ENCODE measurements at regions of chr6 and their contacts with region 1.

Region 1: GRCh38 chr6:80004173-80005072 is at the start of gene TTK:
- DNase-seq: peak; percentile 96
- ATAC-seq: peak; percentile 100
- total RNA-seq, gene TTK: 0.43 TPM

Region 2: DNA sequence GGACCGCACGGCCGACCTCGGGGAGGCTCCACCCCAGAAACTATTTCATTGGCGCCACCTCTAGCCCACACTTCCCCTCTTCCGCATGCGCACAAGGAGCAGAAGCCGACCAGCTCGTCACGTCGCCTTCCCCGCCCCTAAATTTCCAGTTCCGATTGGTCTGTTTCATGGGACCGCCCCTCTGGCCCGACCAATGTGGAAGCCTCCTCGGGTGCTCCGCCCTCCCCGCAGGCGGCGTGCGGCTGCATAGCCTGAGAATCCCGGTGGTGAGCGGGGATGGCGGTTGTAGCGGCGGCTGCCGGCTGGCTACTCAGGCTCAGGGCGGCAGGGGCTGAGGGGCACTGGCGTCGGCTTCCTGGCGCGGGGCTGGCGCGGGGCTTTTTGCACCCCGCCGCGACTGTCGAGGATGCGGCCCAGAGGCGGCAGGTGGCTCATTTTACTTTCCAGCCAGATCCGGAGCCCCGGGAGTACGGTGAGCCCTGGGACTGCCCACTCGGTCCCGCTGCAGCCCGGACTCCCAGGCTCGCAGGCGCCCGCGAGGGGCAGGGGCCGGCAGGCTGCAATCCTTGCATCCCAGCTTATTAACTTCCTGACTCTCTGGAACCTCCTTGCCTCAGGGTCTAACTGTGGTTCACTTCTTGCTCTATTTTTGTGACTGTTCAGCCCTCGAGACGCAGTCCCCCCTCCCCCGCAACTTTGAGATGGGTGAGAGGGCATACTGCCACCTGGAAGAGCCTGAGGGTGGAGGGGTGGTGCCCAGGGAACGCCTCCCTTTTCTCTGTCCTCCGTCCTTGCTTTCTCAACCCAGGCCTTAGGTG is 102.2 kb after region 1 on chr6 and contains the start of gene BCKDHB:
- intact Hi-C with region 1: loop called (anchors 1 kb)
- DNase-seq: peak; percentile 99
- ATAC-seq: peak; percentile 100
- total RNA-seq, gene BCKDHB: 28.5 TPM

Measured in Right ventricle myocardium inferior (tissue), 1 donor.